Heart right ventricle (tissue), 16 donors: ENCODE measurements at regions of chr6 and their contacts with region 1.

Region 1: DNA sequence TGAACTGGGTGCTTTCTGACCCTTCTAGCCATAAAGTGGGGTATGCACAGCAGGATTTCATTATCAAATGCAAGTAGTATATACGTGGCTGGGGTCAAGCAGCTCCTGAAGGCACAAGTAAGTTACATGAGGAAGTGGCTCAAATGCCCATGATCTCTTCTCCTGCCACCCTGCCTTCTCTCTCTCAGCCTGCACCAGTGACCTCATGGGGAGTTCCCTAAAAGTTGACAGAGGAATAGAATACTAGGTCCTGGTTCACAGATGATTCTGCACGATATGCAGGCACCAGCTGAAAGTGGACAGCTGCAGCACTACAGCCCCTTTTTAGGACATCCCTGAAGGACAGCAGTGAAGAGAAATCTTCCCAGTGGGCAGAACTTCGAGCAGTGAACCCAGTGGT is 282.0 kb downstream of the BCKDHB start:
- DNase-seq: no peak
- ATAC-seq: no peak
- H3K4me3 ChIP-seq: no peak overlapping the region
- H3K27ac ChIP-seq: no peak overlapping the region
- H3K4me1 ChIP-seq: no peaks in the 10 kb centered on the region
- H3K27me3 ChIP-seq: no peaks in the 10 kb centered on the region
- CTCF ChIP-seq: no peak

Region 2: GRCh38 chr6:81487489-81487888 is 1099.0 kb after region 1 on chr6:
- intact Hi-C with region 1: loop called in 1 of 10 experiments (anchors 5 kb)
- DNase-seq: peak; percentile 18 to 43
- ATAC-seq: peak in 7 of 8 donors; percentile 59 to 95 (median 84)
- H3K4me3 ChIP-seq: peak overlapping the region in 5 of 10 donors; percentile 16 to 37 (median 25)
- H3K27ac ChIP-seq: no peak overlapping the region
- H3K4me1 ChIP-seq: no peaks in the 10 kb centered on the region
- H3K27me3 ChIP-seq: no peaks in the 10 kb centered on the region
- CTCF ChIP-seq: no peak